ENCODE measurements at regions of chr12 and their contacts with region 1.

Region 1: GRCh38 chr12:76799362-76799761 is 35.4 kb downstream of the ZDHHC17 start:
- DNase-seq: no peak
- ATAC-seq: no peak
- H3K4me3 ChIP-seq: no peak overlapping the region
- H3K4me3 Mint-ChIP-seq: no peak overlapping the region
- H3K27ac ChIP-seq: no peak overlapping the region
- H3K27ac Mint-ChIP-seq: no peak overlapping the region
- H3K4me1 ChIP-seq: no peaks in the 10 kb centered on the region
- H3K4me1 Mint-ChIP-seq: peaks cover 23% of the 10 kb centered on the region
- H3K27me3 ChIP-seq: no peaks in the 10 kb centered on the region
- H3K27me3 Mint-ChIP-seq: no peaks in the 10 kb centered on the region
- CTCF ChIP-seq: no peak

Region 2: GRCh38 chr12:76784600-76785051 is 14.7 kb before region 1 on chr12:
- CTCF ChIA-PET with region 1: no interaction called
- POLR2A ChIA-PET with region 1: no interaction called
- intact Hi-C with region 1: loop called in 1 of 2 experiments (anchors 1 kb)
- DNase-seq: no peak
- ATAC-seq: no peak
- H3K4me3 ChIP-seq: no peak overlapping the region
- H3K4me3 Mint-ChIP-seq: no peak overlapping the region
- H3K27ac ChIP-seq: no peak overlapping the region
- H3K27ac Mint-ChIP-seq: no peak overlapping the region
- H3K4me1 ChIP-seq: peaks cover 5% of the 10 kb centered on the region
- H3K4me1 Mint-ChIP-seq: peaks cover 56% of the 10 kb centered on the region
- H3K27me3 ChIP-seq: no peaks in the 10 kb centered on the region
- H3K27me3 Mint-ChIP-seq: no peaks in the 10 kb centered on the region
- CTCF ChIP-seq: no peak

Region 3: GRCh38 chr12:76890151-76891143 is 91.1 kb after region 1 on chr12:
- CTCF ChIA-PET with region 1: no interaction called
- POLR2A ChIA-PET with region 1: no interaction called
- intact Hi-C with region 1: no loop called
- DNase-seq: peak in 6 of 9 experiments; percentile 13 to 38 (median 16)
- ATAC-seq: peak; percentile 40
- H3K4me3 ChIP-seq: no peak overlapping the region
- H3K4me3 Mint-ChIP-seq: no peak overlapping the region
- H3K27ac ChIP-seq: no peak overlapping the region
- H3K27ac Mint-ChIP-seq: no peak overlapping the region
- H3K4me1 ChIP-seq: no peaks in the 10 kb centered on the region
- H3K4me1 Mint-ChIP-seq: peaks cover 11% of the 10 kb centered on the region
- H3K27me3 ChIP-seq: peaks cover 0 to 2% of the 10 kb centered on the region in 2 experiments
- H3K27me3 Mint-ChIP-seq: peaks cover 15% of the 10 kb centered on the region
- CTCF ChIP-seq: no peak